ENCODE measurements at regions of chr7 and their contacts with region 1.

Region 1: DNA sequence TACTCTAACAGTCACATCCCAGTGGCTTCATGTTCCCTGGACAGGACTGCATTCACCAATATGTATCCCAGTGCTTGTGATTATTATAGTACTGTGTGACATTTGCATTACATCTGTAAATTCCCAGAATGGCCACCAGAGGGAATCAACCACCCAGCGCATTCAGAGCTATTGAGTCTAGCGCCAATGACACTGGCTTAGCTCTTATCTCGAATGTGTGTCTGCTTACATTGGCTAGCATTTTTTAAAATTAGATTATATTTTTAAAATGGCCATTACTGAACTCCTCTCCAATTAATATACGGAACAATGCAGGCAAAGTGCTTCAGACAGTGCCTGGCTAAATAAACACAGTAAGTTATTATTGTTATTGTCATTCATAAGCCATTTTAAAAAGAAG is 36.3 kb downstream of the TRIL start:
- DNase-seq: peak; percentile 64

Region 2: GRCh38 chr7:28020302-28020940 is 901.4 kb before region 1 on chr7:
- CTCF ChIA-PET with region 1: no interaction called
- POLR2A ChIA-PET with region 1: no interaction called
- DNase-seq: peak; percentile 84

Region 3: DNA sequence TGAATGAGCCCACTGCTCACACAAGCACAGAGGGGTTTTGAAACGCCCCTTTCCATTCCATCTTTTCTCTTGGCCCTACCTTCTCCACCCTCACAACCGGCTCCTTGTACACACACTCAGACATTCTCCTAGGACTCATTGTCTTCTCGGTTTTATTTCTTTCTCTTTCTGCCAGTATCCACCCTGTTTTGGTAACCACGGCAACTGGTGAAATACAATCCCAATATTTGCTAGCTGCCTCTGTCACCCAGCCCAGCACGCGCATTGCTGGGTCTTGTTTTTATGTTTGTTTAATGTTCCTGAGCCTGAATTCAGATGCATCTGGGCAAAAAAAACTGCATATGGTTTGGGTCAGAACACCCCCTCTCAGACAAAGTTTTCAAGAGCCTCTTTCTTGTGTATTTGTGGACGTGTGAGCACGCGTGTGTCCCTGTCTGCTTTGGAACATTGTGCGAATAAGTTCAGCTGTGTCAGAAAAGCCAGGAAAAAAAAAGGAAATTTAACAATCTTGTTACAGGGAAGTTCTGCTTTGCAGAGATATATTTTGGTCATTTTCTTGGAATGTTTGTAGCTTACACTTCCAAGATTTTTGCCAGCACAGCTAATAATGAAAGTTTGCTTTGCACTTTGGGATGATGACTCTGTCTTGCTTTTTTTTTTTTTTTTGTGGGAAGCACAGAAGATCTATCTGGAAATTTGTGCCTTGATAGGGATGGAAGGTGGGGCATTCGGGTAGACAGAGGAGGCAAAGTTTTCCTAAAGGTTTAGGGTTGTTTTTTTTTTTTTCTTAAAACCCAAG is 189.6 kb before region 1 on chr7:
- CTCF ChIA-PET with region 1: no interaction called
- POLR2A ChIA-PET with region 1: no interaction called
- DNase-seq: peak; percentile 24

Region 4: GRCh38 chr7:28955718-28956619 is 34.1 kb after region 1 on chr7:
- CTCF ChIA-PET with region 1: interaction called, 40 read pairs
- POLR2A ChIA-PET with region 1: no interaction called
- DNase-seq: peak; percentile 89

Region 5: GRCh38 chr7:29105752-29106668 is 184.2 kb after region 1 on chr7:
- CTCF ChIA-PET with region 1: interaction called, 27 read pairs
- POLR2A ChIA-PET with region 1: interaction called, 6 read pairs
- DNase-seq: peak; percentile 37

Region 6: GRCh38 chr7:29408841-29409243 is 487.0 kb after region 1 on chr7:
- CTCF ChIA-PET with region 1: interaction called, 16 read pairs
- POLR2A ChIA-PET with region 1: no interaction called
- DNase-seq: peak; percentile 67

Region 7: DNA sequence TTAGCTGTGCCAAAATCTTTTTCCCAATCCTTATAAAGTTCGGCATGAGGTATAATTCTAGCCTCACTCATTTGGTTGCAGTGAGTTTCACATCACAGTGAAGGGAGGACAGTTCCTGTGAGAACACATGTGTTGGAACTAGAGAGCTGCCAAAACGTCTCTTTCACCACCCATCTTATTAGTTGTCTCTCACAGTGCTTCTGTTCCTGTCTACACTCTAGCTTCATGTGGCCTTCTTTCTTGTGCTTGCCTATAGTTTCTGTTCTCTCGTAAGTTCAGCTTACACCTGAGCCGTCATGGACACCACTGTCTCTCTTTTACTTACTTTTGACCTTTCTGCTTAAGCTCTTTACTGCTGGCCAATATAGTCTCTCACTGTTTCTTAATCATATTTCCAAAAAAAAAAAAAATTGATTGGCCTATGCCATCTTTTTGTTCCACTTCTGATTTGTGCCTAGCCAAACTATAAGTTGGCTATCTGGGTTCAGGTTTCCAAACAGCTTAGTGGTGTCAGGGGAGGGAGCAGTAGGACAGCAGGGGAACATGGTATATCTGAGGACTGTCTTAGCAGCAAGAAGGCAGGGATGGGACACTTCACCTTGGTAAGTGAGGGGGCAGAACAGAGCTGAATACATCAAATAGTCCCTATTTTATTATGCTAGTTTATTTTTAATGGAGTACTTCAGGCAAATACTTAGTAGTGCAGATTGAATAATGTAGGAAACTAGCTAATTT is 1400.6 kb after region 1 on chr7:
- CTCF ChIA-PET with region 1: interaction called, 13 read pairs
- POLR2A ChIA-PET with region 1: no interaction called
- DNase-seq: no peak

Measured in HEK293T (cell line).